Prostate gland (tissue), 2 donors: ENCODE measurements at regions of chr10 and their contacts with region 1.

Region 1: DNA sequence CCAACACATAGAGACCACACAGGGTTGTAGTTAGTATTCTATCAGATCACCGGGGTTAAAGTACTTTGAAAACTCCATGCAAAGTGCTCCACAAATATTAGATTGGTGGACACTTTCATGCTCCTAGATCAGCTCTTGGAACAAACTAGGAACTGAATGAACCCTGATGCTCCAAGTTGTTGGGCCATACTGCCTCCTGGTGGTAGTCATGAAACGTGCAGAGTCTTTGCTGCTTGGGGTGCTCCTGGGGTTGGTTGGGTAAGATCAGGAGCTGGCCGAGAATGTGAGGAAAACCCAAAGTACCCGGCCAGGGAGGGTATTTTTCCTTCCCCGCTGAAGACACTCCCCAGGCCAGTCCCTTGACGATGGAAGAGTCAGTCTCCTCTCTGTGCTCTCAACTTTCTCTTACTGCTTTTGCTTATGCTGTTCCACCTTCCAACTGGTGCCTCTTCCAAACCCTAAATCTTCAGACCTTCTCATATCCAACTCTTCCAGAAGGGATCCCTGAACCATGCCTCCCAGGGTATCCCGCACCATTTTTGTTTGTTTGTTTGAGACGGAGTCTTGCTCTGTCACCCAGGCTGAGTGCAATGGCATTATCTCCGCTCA is 920 bp upstream of the RPEL1 start:
- DNase-seq: peak; percentile 76
- H3K4me3 ChIP-seq: no peak overlapping the region
- H3K27ac ChIP-seq: no peak overlapping the region
- H3K4me1 ChIP-seq: peaks cover 16% of the 10 kb centered on the region
- H3K27me3 ChIP-seq: no peaks in the 10 kb centered on the region
- CTCF ChIP-seq: peak; percentile 76 to 90 (median 86)
- POLR2A ChIP-seq: no peak

Region 2: DNA sequence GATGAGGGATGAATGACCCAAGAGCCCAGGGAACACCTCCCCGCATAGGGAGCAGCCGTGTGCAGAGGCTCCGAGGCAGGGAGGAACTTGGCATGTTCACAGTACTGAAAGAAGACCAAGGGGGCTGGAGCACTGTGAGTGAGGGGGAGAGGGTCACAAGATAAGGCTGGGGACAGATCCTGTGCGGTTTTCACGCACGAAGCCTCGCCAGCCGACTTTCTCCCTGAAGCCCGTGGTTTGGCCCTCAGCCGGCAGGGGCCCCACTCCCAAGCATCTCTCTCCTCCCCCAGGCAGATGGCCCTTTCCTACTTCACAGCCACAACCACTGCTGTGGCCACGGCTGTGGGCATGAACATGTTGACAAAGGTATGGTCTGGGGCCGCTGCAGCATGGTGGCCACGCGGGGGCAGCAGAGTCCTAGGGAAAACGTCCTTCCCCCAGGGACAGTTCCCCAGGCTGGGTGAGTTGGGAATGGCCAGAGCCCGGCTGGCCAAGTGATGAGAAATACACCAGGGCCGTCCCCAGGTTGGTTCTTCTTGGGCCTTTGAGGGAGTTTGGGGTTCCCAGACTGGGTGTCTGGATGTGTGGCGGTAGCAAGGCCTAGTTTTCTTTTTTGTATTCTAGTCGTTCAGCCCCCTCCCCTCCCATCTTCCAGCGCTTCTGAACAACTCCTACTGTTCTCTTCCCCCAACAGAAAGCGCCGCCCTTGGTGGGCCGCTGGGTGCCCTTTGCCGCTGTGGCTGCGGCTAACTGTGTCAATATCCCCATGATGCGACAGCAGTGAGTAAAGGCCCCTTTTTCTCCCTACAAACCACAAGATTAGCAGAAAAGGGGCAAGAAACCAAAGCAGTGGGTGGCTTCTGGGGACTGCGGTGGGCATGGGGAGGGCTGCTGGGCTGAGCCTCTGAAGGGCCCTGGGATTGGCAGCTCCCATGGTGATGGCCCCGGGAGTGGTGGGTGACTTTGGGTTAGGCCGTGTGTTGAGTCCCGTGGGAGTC is 515.4 kb before region 1 on chr10:
- intact Hi-C with region 1: loop called (anchors 10 kb)
- DNase-seq: peak; percentile 82
- H3K4me3 ChIP-seq: no peak overlapping the region
- H3K27ac ChIP-seq: no peak overlapping the region
- H3K4me1 ChIP-seq: no peaks in the 10 kb centered on the region
- H3K27me3 ChIP-seq: no peaks in the 10 kb centered on the region
- CTCF ChIP-seq: peak; percentile 77 to 94 (median 90)
- POLR2A ChIP-seq: no peak

Region 3: DNA sequence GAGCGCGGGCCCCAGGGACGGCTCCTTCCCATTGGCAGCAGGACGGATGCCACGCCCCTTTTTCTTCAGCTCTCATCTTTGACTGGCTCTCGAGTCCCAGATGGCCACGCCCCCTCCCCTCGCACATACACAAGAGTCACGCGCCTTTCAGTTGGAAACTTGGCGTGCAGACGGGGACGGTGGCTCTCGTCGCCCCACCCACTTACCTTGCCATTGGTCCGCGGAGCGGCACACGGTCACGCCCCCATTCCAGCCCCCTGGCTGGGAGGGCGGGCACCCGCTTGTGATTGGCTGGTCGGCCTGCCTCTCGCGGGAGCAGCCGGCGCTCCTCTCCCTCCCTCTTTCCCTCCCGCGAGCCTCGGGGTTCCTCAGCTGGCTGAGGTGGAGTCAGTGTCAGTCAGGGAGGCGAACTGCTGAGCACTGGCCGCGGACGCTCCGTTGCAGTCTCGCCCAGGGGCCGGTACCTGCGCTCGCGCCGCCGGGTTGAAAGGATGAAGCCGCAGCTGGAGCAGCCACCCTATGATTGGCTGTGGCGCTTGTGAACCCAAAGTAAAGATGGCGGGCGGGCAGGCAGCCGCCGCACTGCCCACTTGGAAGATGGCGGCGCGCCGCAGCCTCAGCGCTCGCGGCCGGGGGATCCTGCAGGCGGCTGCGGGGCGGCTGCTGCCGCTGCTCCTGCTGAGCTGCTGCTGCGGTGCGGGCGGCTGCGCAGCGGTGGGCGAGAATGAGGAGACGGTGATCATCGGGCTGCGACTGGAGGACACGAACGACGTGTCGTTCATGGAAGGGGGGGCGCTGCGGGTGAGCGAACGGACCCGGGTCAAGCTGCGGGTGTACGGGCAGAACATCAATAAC is 326.6 kb before region 1 on chr10 and contains the start of gene CNNM2:
- intact Hi-C with region 1: loop called (anchors 2 kb)
- DNase-seq: peak; percentile 100
- H3K4me3 ChIP-seq: peak within 1 kb of the TSS; percentile 69 to 96
- H3K27ac ChIP-seq: peak within 1 kb of the TSS; percentile 95 to 96
- H3K4me1 ChIP-seq: peaks cover 8% of the 10 kb centered on the region
- H3K27me3 ChIP-seq: no peaks in the 10 kb centered on the region
- CTCF ChIP-seq: peak in 1 of 4 experiments; percentile 51
- POLR2A ChIP-seq: no peak
- total RNA-seq, gene CNNM2: 13.4 to 18.9 TPM

Region 4: GRCh38 chr10:103053659-103054581 is 190.8 kb before region 1 on chr10:
- intact Hi-C with region 1: no loop called
- DNase-seq: peak; percentile 43
- H3K4me3 ChIP-seq: peak overlapping the region; percentile 3 to 8
- H3K27ac ChIP-seq: no peak overlapping the region
- H3K4me1 ChIP-seq: no peaks in the 10 kb centered on the region
- H3K27me3 ChIP-seq: no peaks in the 10 kb centered on the region
- CTCF ChIP-seq: peak in 2 of 4 experiments; percentile 33 to 45
- POLR2A ChIP-seq: no peak

Region 5: GRCh38 chr10:103069453-103070331 is 175.1 kb before region 1 on chr10:
- intact Hi-C with region 1: loop called (anchors 5 kb)
- DNase-seq: peak; percentile 73
- H3K4me3 ChIP-seq: no peak overlapping the region
- H3K27ac ChIP-seq: no peak overlapping the region
- H3K4me1 ChIP-seq: no peaks in the 10 kb centered on the region
- H3K27me3 ChIP-seq: no peaks in the 10 kb centered on the region
- CTCF ChIP-seq: peak; percentile 38 to 90 (median 87)
- POLR2A ChIP-seq: no peak

Region 6: DNA sequence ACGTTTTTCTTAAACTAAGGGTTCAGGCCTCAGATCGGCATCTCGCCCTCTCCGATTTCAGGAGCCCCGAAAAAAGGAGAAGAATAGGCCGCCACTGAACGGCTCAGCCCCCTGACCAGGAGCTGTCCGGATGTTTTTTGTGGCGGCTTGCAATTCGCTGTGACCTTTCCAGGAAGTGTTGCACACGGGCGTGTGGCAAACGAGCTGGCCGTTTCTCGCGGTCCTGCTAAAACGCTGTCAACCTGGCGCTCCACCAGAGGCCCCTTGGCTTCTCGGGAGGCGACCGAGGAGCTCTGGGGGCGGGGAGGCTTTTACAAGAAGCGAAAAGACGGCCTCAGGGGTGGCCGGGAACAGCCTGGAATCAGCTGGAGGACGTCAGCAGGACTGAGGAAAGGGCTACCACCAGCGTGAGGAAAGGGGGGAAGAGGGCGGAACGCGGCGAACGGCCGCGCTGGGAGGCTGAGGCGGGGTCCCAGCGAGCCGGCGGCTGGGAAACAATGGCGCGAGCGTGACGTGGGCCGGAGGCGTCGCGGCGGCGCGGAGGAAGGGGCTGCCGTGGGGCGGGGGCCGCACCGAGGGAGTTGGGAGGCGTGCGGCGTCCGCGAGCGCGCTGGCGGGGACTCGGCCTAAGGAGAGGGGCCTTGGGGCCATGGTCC is 52.2 kb before region 1 on chr10:
- intact Hi-C with region 1: loop called (anchors 5 kb)
- DNase-seq: peak; percentile 58
- H3K4me3 ChIP-seq: peak overlapping the region; percentile 99
- H3K27ac ChIP-seq: peak overlapping the region; percentile 96 to 97
- H3K4me1 ChIP-seq: no peaks in the 10 kb centered on the region
- H3K27me3 ChIP-seq: no peaks in the 10 kb centered on the region
- CTCF ChIP-seq: peak in 1 of 4 experiments; percentile 1
- POLR2A ChIP-seq: peak; percentile 21